ENCODE measurements at regions of chr2 and their contacts with region 1.

Region 1: GRCh38 chr2:65070172-65070830 is 14.1 kb downstream of the CEP68 start:
- DNase-seq: no peak
- ATAC-seq: peak; percentile 25 to 53 (median 44)
- H3K4me3 ChIP-seq: no peak overlapping the region
- H3K27ac ChIP-seq: peak overlapping the region in 11 of 12 donors; percentile 12 to 66 (median 44)
- H3K4me1 ChIP-seq: peaks cover 10 to 82% (median 61%) of the 10 kb centered on the region in 12 donors
- H3K27me3 ChIP-seq: no peaks in the 10 kb centered on the region
- CTCF ChIP-seq: peak in 6 of 12 donors; percentile 15 to 33 (median 31)
- POLR2A ChIP-seq: no peak

Region 2: DNA sequence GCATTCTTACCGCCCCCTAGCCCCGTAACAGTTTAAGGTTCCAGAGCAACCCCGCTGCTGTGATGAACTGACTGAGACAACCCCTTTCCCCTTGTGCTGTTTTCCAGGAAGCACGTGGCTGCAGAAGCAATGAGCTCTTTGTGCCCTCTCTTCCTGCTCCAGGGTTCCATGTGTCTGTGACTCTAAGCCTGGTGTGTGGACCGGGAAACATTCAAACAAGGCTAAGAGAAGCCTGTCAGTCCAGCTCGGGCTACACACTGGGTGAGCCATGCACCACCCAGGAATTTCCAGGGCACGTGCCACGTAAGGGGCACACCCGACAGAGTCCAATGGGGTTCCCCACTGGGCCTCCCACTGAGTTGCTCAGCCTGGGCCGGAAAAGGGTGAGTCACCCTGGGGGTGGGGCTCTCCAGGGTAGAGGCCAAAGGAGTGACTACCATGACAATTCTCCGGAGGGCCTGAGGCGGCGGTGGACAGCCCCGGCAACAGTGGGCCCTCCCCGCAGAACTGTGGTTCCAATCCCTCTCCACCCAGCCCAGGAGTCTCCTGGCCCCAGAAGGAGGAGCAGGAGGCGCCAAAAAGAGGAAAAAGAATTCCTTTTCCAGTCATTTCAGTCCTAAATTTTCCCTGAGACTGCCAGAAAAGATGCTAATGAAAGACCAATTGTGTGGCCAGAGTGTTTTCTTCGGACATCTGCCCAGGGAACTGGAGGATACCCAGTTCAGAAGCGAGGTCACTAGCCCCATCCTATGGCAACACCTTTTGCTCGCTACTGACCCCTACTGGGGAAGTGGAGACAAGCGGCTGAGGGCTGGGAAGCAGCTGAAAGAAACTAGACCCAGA is 238.9 kb before region 1 on chr2:
- intact Hi-C with region 1: no loop called
- DNase-seq: peak; percentile 77 to 93 (median 88)
- ATAC-seq: peak; percentile 79 to 98 (median 97)
- H3K4me3 ChIP-seq: peak overlapping the region in 3 of 12 donors; percentile 2 to 37 (median 9)
- H3K27ac ChIP-seq: peak overlapping the region in 11 of 12 donors; percentile 31 to 90 (median 72)
- H3K4me1 ChIP-seq: peaks cover 0 to 18% (median 10%) of the 10 kb centered on the region in 12 donors
- H3K27me3 ChIP-seq: no peaks in the 10 kb centered on the region
- CTCF ChIP-seq: peak; percentile 83 to 95 (median 88)
- POLR2A ChIP-seq: no peak

Region 3: DNA sequence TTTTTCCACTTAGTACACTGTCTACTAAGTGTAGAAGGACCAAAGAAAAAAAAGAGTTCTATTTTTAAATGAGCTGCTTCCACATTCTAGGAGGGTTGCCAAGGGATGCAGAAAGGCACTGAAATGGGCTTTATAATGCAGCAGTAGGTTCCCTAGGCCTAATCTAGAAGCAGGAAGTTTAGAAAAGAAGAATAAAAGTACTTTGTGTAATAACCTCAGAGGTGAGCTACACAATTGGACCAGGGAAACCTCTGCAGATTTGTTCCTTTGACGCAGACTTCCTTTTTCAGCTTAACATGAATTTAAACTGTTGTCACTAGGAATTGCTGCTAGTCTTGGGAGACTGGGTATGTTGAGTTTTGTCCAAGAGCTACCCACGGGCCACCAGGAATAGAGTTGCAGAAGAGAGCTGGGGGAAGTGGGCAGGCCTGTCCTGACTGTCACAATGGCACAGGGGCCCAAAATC is 94.2 kb after region 1 on chr2:
- intact Hi-C with region 1: loop called in 7 of 10 experiments (anchors 2 to 10 kb)
- DNase-seq: peak in 2 of 5 donors; percentile 38 to 40
- ATAC-seq: peak; percentile 76 to 93 (median 85)
- H3K4me3 ChIP-seq: no peak overlapping the region
- H3K27ac ChIP-seq: peak overlapping the region in 10 of 12 donors; percentile 26 to 78 (median 60)
- H3K4me1 ChIP-seq: peaks cover 0 to 41% (median 16%) of the 10 kb centered on the region in 12 donors
- H3K27me3 ChIP-seq: no peaks in the 10 kb centered on the region
- CTCF ChIP-seq: no peak
- POLR2A ChIP-seq: no peak

Region 4: DNA sequence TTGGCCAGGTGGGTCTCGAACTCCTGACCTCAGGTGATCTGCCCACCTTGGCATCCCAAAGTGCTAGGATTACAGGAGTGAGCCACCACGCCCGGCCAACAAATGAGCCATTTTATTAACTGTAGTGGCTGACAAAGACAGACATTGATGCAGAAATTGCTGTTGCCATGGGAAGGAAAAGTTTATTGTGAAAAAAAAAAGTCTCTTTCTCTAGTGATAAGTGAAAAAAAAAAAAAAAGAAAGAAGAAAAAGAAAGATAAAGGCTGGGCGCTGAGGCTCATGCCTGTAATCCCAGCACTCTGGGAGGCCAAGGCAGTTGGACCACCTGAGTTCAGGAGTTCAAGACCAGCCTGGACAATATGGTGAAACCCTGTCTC is 99.4 kb after region 1 on chr2:
- intact Hi-C with region 1: loop called in 8 of 10 experiments (anchors 2 to 10 kb)
- DNase-seq: no peak
- ATAC-seq: no peak
- H3K4me3 ChIP-seq: no peak overlapping the region
- H3K27ac ChIP-seq: no peak overlapping the region
- H3K4me1 ChIP-seq: peaks cover 0 to 15% (median 3%) of the 10 kb centered on the region in 12 donors
- H3K27me3 ChIP-seq: no peaks in the 10 kb centered on the region
- CTCF ChIP-seq: no peak
- POLR2A ChIP-seq: no peak

Region 5: DNA sequence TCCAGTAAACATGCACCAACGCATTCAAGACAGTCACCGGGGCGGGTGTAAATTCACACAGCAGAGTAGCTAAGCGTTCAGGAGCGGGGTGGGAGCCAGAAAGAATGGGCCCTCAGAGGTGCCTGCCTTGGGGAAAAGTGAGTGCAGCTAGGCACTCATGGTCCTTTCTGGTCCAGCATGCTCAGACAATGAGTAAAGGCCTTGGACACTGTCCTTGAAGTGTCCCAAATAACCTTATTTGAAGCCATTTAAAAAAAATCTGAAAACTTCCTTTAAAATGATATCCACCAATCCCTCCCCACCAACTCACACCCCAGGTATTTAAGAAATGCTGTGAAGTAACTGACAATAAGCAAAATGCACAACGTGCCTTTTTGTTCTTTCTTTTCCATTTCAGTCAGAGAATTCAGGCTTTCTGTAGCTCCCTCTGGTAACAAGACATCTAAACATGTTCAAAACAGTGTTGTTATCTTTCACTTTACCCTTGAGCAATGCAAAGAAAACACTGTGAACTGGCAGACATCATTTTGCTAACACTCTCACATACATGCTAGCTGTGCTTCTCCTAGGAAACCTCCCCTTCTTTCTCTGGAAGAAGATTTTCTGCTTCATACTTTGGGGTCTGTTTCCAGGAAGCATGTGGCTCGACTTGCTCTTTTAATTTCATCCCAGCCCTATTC is 807.2 kb after region 1 on chr2:
- intact Hi-C with region 1: no loop called
- DNase-seq: no peak
- ATAC-seq: no peak
- H3K4me3 ChIP-seq: no peak overlapping the region
- H3K27ac ChIP-seq: no peak overlapping the region
- H3K4me1 ChIP-seq: no peaks in the 10 kb centered on the region
- H3K27me3 ChIP-seq: peaks cover 0 to 12% (median 0%) of the 10 kb centered on the region in 9 donors
- CTCF ChIP-seq: no peak
- POLR2A ChIP-seq: no peak

Measured in heart left ventricle (tissue), 16 donors.